Prostate gland (tissue), 2 donors: ENCODE measurements at regions of chr9 and their contacts with region 1.

Region 1: DNA sequence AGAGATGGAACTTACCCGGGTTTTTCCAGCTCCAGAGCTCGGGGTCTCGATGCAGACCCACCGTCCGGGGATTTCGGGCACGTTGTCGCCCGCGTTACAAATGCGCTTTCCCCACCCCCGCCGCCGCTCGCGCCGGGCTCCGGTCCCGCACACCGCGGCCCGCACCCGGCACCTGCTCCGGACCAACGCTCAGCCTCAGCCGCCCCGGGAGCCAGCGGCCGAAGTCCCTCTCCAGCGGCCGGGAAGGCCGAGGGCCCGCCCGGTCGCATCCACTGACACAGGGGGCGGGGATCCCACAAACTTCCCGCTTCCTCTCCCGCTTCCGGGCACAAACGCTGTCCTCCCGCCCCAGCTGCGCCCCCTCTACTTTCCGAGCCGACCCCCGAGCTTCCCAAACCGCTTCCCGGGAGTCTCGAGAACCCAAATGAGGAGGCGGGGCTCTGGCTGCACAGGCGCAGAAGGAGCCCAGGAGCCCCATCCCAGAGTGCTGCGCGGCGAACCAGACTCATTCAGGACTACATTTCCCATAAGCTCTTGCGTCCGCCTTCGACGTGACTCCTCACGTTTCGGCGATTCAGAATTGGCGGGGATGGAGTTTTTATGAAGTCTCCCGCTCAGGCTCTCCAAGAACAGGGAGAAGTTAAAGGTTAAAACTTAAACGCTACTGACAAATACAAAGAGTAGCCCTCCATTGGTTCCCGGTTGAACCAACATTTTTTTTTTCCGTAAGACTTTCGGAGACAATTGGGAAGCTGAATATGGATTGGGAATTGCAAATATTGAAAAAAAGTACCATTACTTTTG is at the start of gene ZNF782:
- DNase-seq: peak; percentile 92
- H3K4me3 ChIP-seq: peak within 1 kb of the TSS; percentile 72 to 91
- H3K27ac ChIP-seq: peak within 1 kb of the TSS; percentile 78 to 82
- H3K4me1 ChIP-seq: no peaks in the 10 kb centered on the region
- H3K27me3 ChIP-seq: no peaks in the 10 kb centered on the region
- CTCF ChIP-seq: peak in 1 of 4 experiments; percentile 24
- POLR2A ChIP-seq: peak; percentile 73
- total RNA-seq, gene ZNF782: 15.8 to 30.9 TPM

Region 2: DNA sequence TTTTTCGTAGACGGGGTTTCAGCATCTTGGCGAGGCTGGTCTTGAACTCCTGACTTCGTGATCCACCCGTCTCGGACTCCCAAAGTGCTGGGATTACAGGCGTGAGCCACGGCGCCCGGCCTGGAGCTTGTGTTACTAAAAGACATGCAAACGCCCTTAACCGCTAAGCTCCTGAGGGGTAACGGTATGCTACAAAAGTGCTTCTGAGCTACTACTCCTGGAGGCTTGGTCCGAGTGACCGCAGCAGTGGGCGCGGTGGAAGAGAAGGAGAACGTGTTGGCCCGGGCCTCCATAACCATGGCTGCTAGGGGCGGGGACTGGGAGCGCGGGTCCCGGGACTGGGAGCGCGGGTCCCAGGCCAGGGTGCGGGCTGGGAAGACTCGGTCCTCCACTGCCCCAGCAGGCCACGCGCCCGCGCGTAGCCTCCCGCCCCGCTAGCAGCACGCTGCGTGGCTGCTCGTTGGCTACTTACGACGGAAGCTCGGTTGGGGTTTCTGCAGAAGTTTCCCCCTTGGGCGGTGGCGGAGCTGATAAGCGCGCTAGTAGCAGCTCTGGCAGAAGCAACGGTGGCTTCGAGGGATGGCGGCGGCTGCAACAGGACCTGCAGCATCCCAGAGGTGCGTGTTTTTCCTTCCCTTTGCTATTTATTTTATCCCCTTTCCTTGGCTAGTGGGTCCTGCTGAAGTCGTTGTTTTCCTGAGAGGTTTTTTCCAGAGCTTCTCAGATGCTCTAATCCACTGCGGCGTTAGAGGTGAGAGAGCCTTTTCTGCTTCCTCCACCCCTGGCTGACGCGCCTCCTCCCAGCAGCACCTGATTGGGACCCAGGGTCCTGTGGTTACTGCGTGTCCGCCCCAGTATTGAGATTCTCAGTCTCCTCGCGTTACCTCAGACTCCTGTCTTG is 383.9 kb after region 1 on chr9:
- intact Hi-C with region 1: loop called (anchors 10 kb)
- DNase-seq: peak; percentile 82
- H3K4me3 ChIP-seq: peak overlapping the region; percentile 41 to 61
- H3K27ac ChIP-seq: peak overlapping the region; percentile 56 to 75
- H3K4me1 ChIP-seq: no peaks in the 10 kb centered on the region
- H3K27me3 ChIP-seq: no peaks in the 10 kb centered on the region
- CTCF ChIP-seq: no peak
- POLR2A ChIP-seq: no peak

Region 3: GRCh38 chr9:97398999-97399758 is 544.9 kb after region 1 on chr9:
- intact Hi-C with region 1: loop called (anchors 5 kb)
- DNase-seq: peak; percentile 23
- H3K4me3 ChIP-seq: no peak overlapping the region
- H3K27ac ChIP-seq: no peak overlapping the region
- H3K4me1 ChIP-seq: no peaks in the 10 kb centered on the region
- H3K27me3 ChIP-seq: no peaks in the 10 kb centered on the region
- CTCF ChIP-seq: peak; percentile 39 to 89 (median 65)
- POLR2A ChIP-seq: no peak